ENCODE measurements at regions of chr7 and their contacts with region 1.

Region 1: DNA sequence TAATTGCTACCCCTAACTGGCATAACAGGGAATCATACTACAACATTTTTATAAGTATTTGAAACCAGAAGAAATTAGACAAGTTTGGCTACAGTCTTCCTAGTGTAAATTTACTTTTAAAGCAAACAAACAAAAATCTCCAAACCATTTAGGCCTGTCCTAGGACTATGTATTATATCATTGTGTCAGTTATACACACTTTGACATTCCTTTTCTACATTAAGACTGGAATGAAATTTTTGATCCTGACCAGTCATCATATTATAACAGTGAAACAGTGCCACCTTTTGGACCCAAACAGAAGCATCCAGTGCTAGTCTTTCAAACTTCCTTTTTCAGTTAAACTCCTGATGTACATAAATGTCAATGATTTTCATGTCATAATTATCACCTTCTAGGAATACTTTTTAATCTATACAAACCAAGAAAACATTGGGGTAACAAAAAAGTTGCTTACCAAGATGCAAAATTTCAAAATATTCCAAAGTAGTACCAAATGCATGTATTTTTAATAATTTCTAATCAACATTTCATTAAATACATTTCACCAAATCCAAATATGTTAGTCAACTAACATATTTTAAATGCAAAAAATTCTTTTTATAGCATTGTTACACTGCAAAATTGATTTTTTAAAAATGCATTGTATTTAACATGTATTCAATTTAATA is 75.7 kb downstream of the IMMP2L start:
- DNase-seq: no peak
- H3K4me3 ChIP-seq: no peak overlapping the region
- H3K27ac ChIP-seq: no peak overlapping the region
- H3K4me1 ChIP-seq: no peaks in the 10 kb centered on the region
- H3K27me3 ChIP-seq: no peaks in the 10 kb centered on the region
- CTCF ChIP-seq: peak; percentile 83

Region 2: GRCh38 chr7:111089822-111090426 is 396.7 kb before region 1 on chr7:
- intact Hi-C with region 1: loop called (anchors 5 kb)
- DNase-seq: no peak
- H3K4me3 ChIP-seq: no peak overlapping the region
- H3K27ac ChIP-seq: no peak overlapping the region
- H3K4me1 ChIP-seq: peaks cover 44% of the 10 kb centered on the region
- H3K27me3 ChIP-seq: no peaks in the 10 kb centered on the region
- CTCF ChIP-seq: peak; percentile 86

Region 3: GRCh38 chr7:111329367-111330234 is 157.0 kb before region 1 on chr7:
- intact Hi-C with region 1: loop called (anchors 10 kb)
- DNase-seq: no peak
- H3K4me3 ChIP-seq: no peak overlapping the region
- H3K27ac ChIP-seq: no peak overlapping the region
- H3K4me1 ChIP-seq: no peaks in the 10 kb centered on the region
- H3K27me3 ChIP-seq: no peaks in the 10 kb centered on the region
- CTCF ChIP-seq: peak; percentile 18

Measured in left ventricle myocardium inferior (tissue), 1 donor.